Colonic mucosa (tissue), 4 donors: ENCODE measurements at regions of chr3 and their contacts with region 1.

Region 1: GRCh38 chr3:118433825-118434224 is 600.8 kb downstream of the IGSF11 start:
- DNase-seq: no peak
- H3K4me3 ChIP-seq: no peak overlapping the region
- H3K27ac ChIP-seq: no peak overlapping the region
- H3K4me1 ChIP-seq: no peaks in the 10 kb centered on the region
- H3K27me3 ChIP-seq: no peaks in the 10 kb centered on the region
- CTCF ChIP-seq: no peak

Region 2: GRCh38 chr3:118705487-118706219 is 271.8 kb after region 1 on chr3:
- intact Hi-C with region 1: loop called (anchors 5 kb)
- DNase-seq: no peak
- H3K4me3 ChIP-seq: no peak overlapping the region
- H3K27ac ChIP-seq: no peak overlapping the region
- H3K4me1 ChIP-seq: no peaks in the 10 kb centered on the region
- H3K27me3 ChIP-seq: no peaks in the 10 kb centered on the region
- CTCF ChIP-seq: no peak